Activated B cell treated with CpG ODN at 0.5 μM for 24 hours (primary cell): ENCODE measurements at regions of chr10 and their contacts with region 1.

Region 1: DNA sequence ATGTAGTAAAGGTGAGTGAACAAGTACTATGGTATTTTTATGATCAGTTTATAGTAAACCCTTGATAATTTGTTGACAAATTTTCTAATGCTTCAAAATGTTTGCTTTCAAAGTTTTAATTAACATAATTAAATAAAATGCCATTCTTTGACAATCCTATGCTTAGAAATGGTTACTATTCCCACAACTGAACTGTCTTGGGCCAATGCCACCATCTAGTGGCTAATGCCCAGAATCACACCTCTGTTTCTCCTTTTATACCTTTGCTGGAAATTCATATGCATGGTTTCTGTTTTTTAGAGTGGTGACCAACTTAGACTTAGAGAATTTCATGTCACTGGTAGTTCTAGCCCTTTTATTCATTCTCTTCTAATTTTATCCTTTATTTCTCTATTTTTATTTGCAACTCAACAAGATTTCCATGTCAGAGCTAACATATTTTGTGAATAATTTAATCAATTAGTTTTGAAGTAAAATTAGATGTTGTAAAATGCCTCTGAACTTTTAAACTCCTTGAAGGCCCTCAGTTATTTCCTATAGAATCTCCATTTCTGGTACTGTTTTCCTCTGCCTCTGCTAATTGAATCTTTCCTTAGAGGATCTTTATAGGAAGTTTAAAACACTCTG is 31.1 kb downstream of the PCGF5 start:
- DNase-seq: no peak
- ATAC-seq: peak; percentile 82
- H3K4me3 Mint-ChIP-seq: no peak overlapping the region
- H3K27ac Mint-ChIP-seq: no peak overlapping the region
- H3K4me1 Mint-ChIP-seq: peaks cover 4% of the 10 kb centered on the region
- H3K27me3 Mint-ChIP-seq: no peaks in the 10 kb centered on the region
- CTCF ChIP-seq: peak; percentile 97

Region 2: DNA sequence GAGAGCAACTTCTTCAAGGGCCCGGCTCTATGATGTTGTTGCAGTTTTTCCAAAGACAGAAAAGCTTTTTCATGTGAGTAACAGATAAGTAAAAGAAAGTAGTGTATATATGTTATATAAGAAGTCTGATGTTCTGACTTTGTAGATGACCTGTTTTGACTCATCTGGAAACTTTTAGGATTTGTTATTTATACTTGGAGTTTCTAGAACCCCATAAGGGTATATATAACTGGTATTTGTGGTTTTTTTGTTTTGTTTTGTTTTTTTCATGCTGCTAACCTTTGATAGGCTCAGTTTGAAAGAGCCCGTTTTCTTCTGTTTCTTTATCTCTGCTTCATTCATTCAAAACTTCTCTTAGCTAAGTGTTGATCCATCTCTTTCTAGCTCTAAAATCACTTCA is 372.5 kb before region 1 on chr10:
- CTCF ChIA-PET with region 1: interaction called, 12 read pairs
- POLR2A ChIA-PET with region 1: no interaction called
- intact Hi-C with region 1: loop called (anchors 1 kb)
- DNase-seq: no peak
- ATAC-seq: no peak
- H3K4me3 Mint-ChIP-seq: no peak overlapping the region
- H3K27ac Mint-ChIP-seq: no peak overlapping the region
- H3K4me1 Mint-ChIP-seq: peaks cover 2% of the 10 kb centered on the region
- H3K27me3 Mint-ChIP-seq: no peaks in the 10 kb centered on the region
- CTCF ChIP-seq: no peak

Region 3: DNA sequence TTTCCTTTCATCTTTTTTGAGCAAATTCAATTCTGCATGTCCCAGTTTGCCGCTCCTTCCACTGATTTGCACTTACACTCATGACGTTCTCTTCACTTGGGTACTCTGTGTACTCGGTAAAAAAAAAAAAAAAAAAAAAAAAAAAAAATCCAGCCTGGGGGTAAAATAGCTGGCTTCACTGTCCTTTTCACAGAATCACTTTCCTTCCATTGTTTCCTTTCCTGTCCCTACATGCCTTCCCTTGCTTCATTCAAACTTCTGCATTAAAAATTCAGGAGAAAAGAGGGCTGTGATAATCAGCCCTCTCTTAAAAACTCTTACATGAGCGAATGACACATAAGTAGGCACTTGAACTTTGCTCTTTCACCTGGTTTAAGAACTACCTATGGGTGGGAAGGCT is 339.4 kb before region 1 on chr10:
- CTCF ChIA-PET with region 1: interaction called, 193 read pairs
- POLR2A ChIA-PET with region 1: interaction called, 24 read pairs
- intact Hi-C with region 1: loop called (anchors 1 kb)
- DNase-seq: no peak
- ATAC-seq: no peak
- H3K4me3 Mint-ChIP-seq: no peak overlapping the region
- H3K27ac Mint-ChIP-seq: no peak overlapping the region
- H3K4me1 Mint-ChIP-seq: peaks cover 19% of the 10 kb centered on the region
- H3K27me3 Mint-ChIP-seq: no peaks in the 10 kb centered on the region
- CTCF ChIP-seq: no peak

Region 4: DNA sequence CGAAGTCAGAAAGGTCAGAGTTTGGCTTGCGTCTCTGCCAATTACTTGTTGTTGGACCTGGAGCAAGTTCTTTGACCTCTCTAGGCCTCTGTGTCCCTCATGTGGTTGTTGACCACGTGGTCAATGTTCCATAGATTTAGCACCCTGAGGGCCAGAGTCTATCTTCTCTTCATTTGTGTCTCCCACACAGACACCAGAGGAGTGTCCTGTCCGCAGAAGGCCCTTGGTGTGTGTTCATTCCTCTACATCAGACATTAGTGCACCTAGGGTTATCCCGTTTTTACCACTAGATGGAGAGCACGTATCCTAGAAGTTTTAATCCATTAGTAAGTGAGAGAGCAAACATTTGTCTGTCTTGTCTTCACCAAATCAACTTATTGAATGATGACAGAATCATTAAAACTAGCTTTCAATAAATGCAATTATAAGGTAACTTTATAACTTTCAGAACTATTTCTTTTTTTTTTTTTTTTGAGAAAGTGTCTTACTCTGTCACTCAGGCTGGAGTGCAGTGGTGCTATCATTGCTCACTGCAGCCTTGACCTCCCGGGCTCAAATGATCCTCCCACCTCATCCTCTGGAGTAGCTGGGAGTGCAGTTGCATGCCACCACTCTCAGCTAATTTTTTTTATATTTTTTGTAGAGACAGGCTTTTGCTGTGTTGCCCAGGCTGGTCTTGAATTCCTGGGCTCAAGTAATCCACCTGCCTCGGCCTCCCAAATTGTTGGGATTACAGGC is 208.2 kb before region 1 on chr10:
- CTCF ChIA-PET with region 1: interaction called, 11 read pairs
- POLR2A ChIA-PET with region 1: interaction called, 3 read pairs
- intact Hi-C with region 1: loop called (anchors 1 kb)
- DNase-seq: no peak
- ATAC-seq: no peak
- H3K4me3 Mint-ChIP-seq: no peak overlapping the region
- H3K27ac Mint-ChIP-seq: no peak overlapping the region
- H3K4me1 Mint-ChIP-seq: no peaks in the 10 kb centered on the region
- H3K27me3 Mint-ChIP-seq: no peaks in the 10 kb centered on the region
- CTCF ChIP-seq: no peak

Region 5: DNA sequence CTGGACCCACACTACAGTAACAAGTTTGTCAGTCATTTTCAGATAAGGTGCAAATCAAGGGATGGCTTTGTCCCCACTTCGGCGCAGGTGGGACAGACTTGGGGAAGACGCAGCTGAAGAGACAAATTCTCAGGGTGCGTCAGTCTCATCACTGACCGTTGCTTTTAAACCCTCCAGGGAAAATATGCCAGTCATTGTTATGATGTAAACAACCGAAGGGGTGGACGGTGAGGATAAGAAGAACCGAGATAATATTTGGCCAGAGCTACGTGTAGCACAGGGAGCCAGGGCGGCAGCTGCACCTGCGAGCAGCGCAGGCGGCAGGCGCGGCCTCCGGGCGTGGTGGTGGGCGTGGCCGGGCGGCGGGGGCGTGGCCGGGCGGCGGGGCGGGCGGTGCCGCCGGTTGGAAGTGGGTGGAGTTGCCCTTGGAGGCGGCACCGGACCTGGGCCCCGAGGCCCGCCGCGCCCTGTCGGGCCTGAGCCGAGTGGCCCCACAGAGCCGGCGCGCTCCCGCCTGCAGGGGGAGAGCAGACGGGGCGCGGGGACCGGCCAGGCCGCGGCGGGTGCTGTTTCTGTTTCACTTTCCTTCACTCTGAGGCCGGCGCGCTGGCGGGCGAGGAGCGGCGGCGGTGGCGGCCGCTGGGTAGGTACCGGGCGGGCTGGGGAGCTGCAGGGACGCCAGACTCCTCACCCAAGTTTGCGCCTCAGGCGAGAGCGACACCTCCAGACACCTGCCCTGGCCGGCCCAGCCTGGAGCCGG is 31.2 kb before region 1 on chr10 and contains the start of gene PCGF5:
- CTCF ChIA-PET with region 1: interaction called, 6 read pairs
- POLR2A ChIA-PET with region 1: interaction called, 6 read pairs
- intact Hi-C with region 1: loop called (anchors 2 kb)
- DNase-seq: peak; percentile 97
- ATAC-seq: peak; percentile 96
- H3K4me3 Mint-ChIP-seq: peak within 1 kb of the TSS; percentile 93
- H3K27ac Mint-ChIP-seq: peak within 1 kb of the TSS; percentile 91
- H3K4me1 Mint-ChIP-seq: peaks cover 68% of the 10 kb centered on the region
- H3K27me3 Mint-ChIP-seq: no peaks in the 10 kb centered on the region
- CTCF ChIP-seq: no peak
- total RNA-seq, gene PCGF5: 70.2 and 72.9 TPM in 2 replicates